ENCODE measurements at regions of chr3 and their contacts with region 1.

Region 1: GRCh38 chr3:120742198-120742849 is at the starts of genes GTF2E1 and RABL3:
- DNase-seq: peak; percentile 90 to 99
- ATAC-seq: peak; percentile 99 to 100 (median 100)
- H3K4me3 ChIP-seq: peak within 1 kb of the TSS; percentile 64 to 95 (median 84)
- H3K27ac ChIP-seq: peak within 1 kb of the TSS; percentile 73 to 99 (median 94)
- H3K4me1 ChIP-seq: peaks cover 4 to 32% (median 21%) of the 10 kb centered on the region in 9 donors
- H3K27me3 ChIP-seq: no peaks in the 10 kb centered on the region
- CTCF ChIP-seq: no peak
- total RNA-seq, gene GTF2E1: 7.9 to 16.2 (median 11.7) TPM
- total RNA-seq, gene RABL3: 13.8 to 33.9 (median 23.3) TPM

Region 2: DNA sequence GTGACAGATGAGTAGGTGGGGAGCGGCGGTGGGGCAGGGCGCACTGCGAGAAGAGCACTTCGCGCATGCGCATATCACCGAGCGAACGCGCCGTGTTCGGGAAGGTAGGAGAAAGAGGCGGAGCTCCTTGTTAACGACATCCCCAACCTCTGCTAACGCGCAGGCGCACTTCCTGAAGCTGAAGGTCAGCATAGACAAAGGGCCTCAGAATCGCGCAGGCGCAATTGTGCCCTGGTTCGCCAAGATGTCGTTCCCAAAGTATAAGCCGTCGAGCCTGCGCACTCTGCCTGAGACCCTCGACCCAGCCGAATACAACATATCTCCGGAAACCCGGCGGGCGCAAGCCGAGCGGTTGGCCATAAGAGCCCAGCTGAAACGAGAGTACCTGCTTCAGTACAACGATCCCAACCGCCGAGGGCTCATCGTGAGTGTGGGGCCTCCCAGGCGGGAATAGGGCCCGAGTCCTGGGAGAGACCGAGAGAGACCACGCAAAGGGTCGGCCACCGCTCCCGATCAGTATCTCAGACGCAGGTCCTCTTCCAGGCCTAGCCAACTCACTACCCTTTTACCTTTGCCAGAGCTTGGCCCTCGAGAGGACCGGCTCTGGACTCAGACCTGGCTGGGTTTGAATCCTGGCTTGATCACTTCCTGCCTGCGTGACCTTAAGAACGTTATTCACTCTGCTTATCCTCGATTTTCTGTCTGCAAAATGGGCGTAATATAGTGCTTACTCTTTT is 146.0 kb before region 1 on chr3 and contains the start of gene NDUFB4:
- intact Hi-C with region 1: loop called in 5 of 10 experiments (anchors 1 to 5 kb)
- DNase-seq: peak; percentile 97 to 99
- ATAC-seq: peak; percentile 99 to 100 (median 100)
- H3K4me3 ChIP-seq: peak within 1 kb of the TSS; percentile 55 to 99 (median 91)
- H3K27ac ChIP-seq: peak within 1 kb of the TSS; percentile 82 to 99 (median 95)
- H3K4me1 ChIP-seq: peaks cover 9 to 50% (median 39%) of the 10 kb centered on the region in 9 donors
- H3K27me3 ChIP-seq: no peaks in the 10 kb centered on the region
- CTCF ChIP-seq: no peak
- total RNA-seq, gene NDUFB4: 347 to 581 (median 535) TPM

Region 3: GRCh38 chr3:120615847-120616599 is 126.3 kb before region 1 on chr3:
- intact Hi-C with region 1: loop called in 1 of 10 experiments (anchors 5 kb)
- DNase-seq: peak; percentile 54 to 65
- ATAC-seq: peak; percentile 78 to 94 (median 88)
- H3K4me3 ChIP-seq: no peak overlapping the region
- H3K27ac ChIP-seq: peak overlapping the region in 7 of 10 donors; percentile 31 to 80 (median 62)
- H3K4me1 ChIP-seq: peaks cover 0 to 6% (median 0%) of the 10 kb centered on the region in 9 donors
- H3K27me3 ChIP-seq: no peaks in the 10 kb centered on the region
- CTCF ChIP-seq: no peak

Region 4: DNA sequence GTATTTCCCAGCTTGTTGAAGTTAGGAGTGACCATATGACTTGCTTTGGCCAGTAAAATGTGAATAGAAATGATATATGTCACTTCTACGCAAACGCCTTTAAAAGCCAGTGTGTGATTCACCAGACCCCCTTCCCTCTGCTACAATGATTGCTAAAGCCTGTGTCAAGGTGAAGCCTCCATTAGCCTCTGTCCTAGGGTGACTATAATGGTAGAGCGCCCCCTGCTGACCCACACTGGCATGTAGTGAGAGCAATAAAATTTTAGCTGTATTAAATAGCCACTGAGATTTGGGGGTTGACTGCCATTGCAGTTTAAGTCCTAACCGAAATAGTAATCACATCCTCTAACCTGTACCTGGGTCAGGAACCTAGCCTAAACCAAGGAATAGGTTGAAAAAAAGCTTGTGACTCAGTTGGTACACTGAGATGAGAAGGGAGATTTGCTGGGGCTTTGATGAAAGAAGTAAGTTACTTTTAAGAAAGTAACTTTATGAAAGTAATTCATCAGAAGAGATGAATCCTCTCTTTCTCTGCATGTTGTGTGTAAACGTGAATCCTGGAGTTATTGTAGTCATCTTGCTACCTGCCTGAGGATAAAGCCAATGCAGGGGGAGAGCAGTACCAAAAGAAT is 52.8 kb after region 1 on chr3:
- intact Hi-C with region 1: no loop called
- DNase-seq: peak; percentile 74 to 77
- ATAC-seq: peak; percentile 79 to 94 (median 88)
- H3K4me3 ChIP-seq: no peak overlapping the region
- H3K27ac ChIP-seq: no peak overlapping the region
- H3K4me1 ChIP-seq: no peaks in the 10 kb centered on the region
- H3K27me3 ChIP-seq: no peaks in the 10 kb centered on the region
- CTCF ChIP-seq: peak; percentile 63 to 86 (median 81)

Region 5: DNA sequence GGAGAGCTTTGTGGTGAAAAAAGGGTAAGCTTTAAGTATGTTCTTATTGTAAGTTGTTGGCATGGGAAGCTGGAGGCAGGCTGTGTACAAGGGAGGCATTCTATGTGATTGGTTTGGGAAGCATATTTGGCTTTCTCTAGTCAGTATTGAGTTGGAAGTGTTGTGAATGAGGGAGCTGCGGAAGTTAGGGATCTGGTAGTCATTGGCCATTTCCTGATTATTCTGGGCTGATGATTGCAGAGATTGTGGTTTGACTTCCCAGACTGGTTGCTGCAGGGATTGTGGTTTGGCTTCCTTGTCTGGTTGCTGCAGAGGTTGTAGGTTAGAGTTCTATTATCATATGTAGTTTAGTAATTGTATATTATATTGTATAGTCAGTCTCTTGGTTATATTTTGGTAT is 186.7 kb after region 1 on chr3:
- intact Hi-C with region 1: no loop called
- DNase-seq: no peak
- ATAC-seq: no peak
- H3K4me3 ChIP-seq: no peak overlapping the region
- H3K27ac ChIP-seq: no peak overlapping the region
- H3K4me1 ChIP-seq: no peaks in the 10 kb centered on the region
- H3K27me3 ChIP-seq: no peaks in the 10 kb centered on the region
- CTCF ChIP-seq: no peak

Measured in heart right ventricle (tissue), 16 donors.